OCI-LY7 (cell line): ENCODE measurements at regions of chr1 and their contacts with region 1.

Region 1: GRCh38 chr1:159071970-159072582 is 4.5 kb downstream of the AIM2 start:
- DNase-seq: peak; percentile 78
- H3K4me3 ChIP-seq: peak overlapping the region; percentile 68
- H3K27ac ChIP-seq: peak overlapping the region; percentile 68
- H3K4me1 ChIP-seq: peaks cover 77% of the 10 kb centered on the region
- CTCF ChIP-seq: peak; percentile 92

Region 2: DNA sequence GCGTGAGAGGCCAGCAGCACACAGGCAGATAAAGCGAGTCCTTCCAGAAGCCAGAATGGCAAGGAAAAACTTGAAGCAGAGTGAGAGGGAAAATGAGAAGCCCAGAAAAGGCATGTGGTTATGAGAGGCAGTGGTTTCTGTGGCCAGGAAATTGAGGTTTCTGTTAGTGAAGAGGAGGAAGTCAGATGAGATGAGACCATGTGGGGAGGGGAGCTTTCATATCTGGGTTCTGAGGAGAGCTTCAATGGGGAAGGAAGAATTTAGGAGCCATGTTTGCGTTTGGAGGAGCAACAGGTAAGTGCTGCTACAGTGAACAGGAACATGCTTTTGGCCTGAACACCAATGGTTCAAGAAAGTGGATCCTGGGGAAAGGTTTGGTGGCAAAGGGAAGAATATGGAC is 824.0 kb before region 1 on chr1:
- CTCF ChIA-PET with region 1: no interaction called
- POLR2A ChIA-PET with region 1: no interaction called
- intact Hi-C with region 1: loop called (anchors 1 kb)
- DNase-seq: peak; percentile 81
- H3K4me3 ChIP-seq: peak overlapping the region; percentile 16
- H3K27ac ChIP-seq: no peak overlapping the region
- H3K4me1 ChIP-seq: peaks cover 25% of the 10 kb centered on the region
- CTCF ChIP-seq: no peak

Region 3: GRCh38 chr1:158506369-158506987 is 565.6 kb before region 1 on chr1:
- CTCF ChIA-PET with region 1: no interaction called
- POLR2A ChIA-PET with region 1: no interaction called
- intact Hi-C with region 1: loop called (anchors 5 kb)
- DNase-seq: peak; percentile 56
- H3K4me3 ChIP-seq: no peak overlapping the region
- H3K27ac ChIP-seq: no peak overlapping the region
- H3K4me1 ChIP-seq: no peaks in the 10 kb centered on the region
- CTCF ChIP-seq: peak; percentile 84

Region 4: GRCh38 chr1:158654571-158654970 is 417.5 kb before region 1 on chr1:
- CTCF ChIA-PET with region 1: no interaction called
- POLR2A ChIA-PET with region 1: no interaction called
- intact Hi-C with region 1: loop called (anchors 5 kb)
- DNase-seq: peak; percentile 76
- H3K4me3 ChIP-seq: peak overlapping the region; percentile 25
- H3K27ac ChIP-seq: no peak overlapping the region
- H3K4me1 ChIP-seq: peaks cover 28% of the 10 kb centered on the region
- CTCF ChIP-seq: 0 out of 2 replicates have a peak, but pooled peaks have one; percentile 39

Region 5: GRCh38 chr1:158931055-158931737 is 140.9 kb before region 1 on chr1 and contains the start of gene PYHIN1:
- CTCF ChIA-PET with region 1: no interaction called
- POLR2A ChIA-PET with region 1: no interaction called
- intact Hi-C with region 1: loop called (anchors 5 kb)
- DNase-seq: peak; percentile 79
- H3K4me3 ChIP-seq: peak within 1 kb of the TSS; percentile 76
- H3K27ac ChIP-seq: peak within 1 kb of the TSS; percentile 76
- H3K4me1 ChIP-seq: peaks cover 37% of the 10 kb centered on the region
- CTCF ChIP-seq: no peak
- total RNA-seq, gene PYHIN1: 42.5 and 44.6 TPM in 2 replicates

Region 6: DNA sequence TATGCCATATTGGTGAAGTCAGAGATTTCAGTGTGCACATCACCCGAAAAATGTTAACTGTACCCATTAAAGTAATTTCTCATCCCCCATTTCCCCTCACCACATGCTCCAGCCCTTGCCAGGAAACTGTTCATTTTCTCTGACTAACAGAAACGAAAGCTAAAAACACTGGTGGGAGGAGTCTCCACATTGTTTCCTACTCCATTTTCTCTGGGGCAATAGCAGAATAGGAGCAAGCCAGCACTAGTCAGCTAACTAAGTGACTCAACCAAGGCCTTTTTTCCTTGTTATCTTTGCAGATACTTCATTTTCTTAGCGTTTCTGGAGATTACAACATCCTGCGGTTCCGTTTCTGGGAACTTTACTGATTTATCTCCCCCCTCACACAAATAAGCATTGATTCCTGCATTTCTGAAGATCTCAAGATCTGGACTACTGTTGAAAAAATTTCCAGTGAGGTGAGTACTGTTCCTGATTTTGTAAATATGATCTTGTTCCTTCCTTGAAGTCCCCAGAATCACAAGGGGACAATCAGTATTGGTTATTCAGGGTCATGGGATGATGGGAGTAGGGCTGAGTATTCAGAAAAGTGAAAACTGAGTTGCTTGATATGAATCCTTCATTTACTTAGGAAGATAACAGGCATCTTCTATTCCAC is 62.2 kb before region 1 on chr1 and contains the start of gene IFI16:
- CTCF ChIA-PET with region 1: interaction called, 5 read pairs
- POLR2A ChIA-PET with region 1: interaction called, 93 read pairs
- intact Hi-C with region 1: loop called (anchors 1 kb)
- DNase-seq: peak; percentile 80
- H3K4me3 ChIP-seq: peak within 1 kb of the TSS; percentile 88
- H3K27ac ChIP-seq: peak within 1 kb of the TSS; percentile 89
- H3K4me1 ChIP-seq: peaks cover 67% of the 10 kb centered on the region
- CTCF ChIP-seq: no peak
- total RNA-seq, gene IFI16: 96.5 and 99.3 TPM in 2 replicates